ENCODE measurements at regions of chr3 and their contacts with region 1.

Region 1: GRCh38 chr3:177300039-177300833 is 103.0 kb upstream of the TBL1XR1 start:
- DNase-seq: no peak
- H3K4me3 ChIP-seq: no peak overlapping the region
- H3K27ac ChIP-seq: no peak overlapping the region
- H3K4me1 ChIP-seq: no peaks in the 10 kb centered on the region
- H3K27me3 ChIP-seq: no peaks in the 10 kb centered on the region
- CTCF ChIP-seq: no peak
- POLR2A ChIP-seq: no peak

Region 2: DNA sequence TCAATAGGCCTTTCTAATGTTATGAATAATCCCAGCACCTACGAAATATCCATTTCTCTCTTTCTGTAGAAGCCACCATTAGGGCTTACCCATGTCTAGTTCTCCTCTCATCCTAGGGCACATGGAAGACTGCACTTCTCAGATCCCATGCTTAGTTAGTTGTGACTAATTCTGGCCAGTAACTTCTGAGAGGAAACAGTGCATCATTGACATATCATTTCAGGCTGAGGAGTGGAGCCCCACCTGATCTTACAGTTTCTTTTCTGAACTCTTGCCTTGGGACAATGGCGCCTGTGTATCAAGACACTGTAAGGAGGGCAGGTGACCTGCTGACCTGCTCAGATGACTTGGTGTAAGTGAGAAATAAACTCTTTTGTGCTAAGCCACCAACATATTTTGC is 63.5 kb before region 1 on chr3:
- intact Hi-C with region 1: no loop called
- DNase-seq: no peak
- H3K4me3 ChIP-seq: no peak overlapping the region
- H3K27ac ChIP-seq: no peak overlapping the region
- H3K4me1 ChIP-seq: no peaks in the 10 kb centered on the region
- H3K27me3 ChIP-seq: no peaks in the 10 kb centered on the region
- CTCF ChIP-seq: no peak
- POLR2A ChIP-seq: no peak

Region 3: GRCh38 chr3:177377191-177377625 is 77.0 kb after region 1 on chr3:
- intact Hi-C with region 1: loop called (anchors 2 kb)
- DNase-seq: peak; percentile 59 to 74
- H3K4me3 ChIP-seq: peak overlapping the region in 1 of 3 donors; percentile 40
- H3K27ac ChIP-seq: peak overlapping the region; percentile 45 to 68
- H3K4me1 ChIP-seq: no peaks in the 10 kb centered on the region
- H3K27me3 ChIP-seq: no peaks in the 10 kb centered on the region
- CTCF ChIP-seq: peak in 1 of 3 donors; percentile 12
- POLR2A ChIP-seq: no peak

Measured in breast epithelium (tissue), 4 donors.